Activated CD4-positive, alpha-beta T cell treated with anti-CD3 and anti-CD28 coated beads for 36 hours (primary cell): ENCODE measurements at regions of chr2 and their contacts with region 1.

Region 1: GRCh38 chr2:153519257-153519875 is 40.8 kb upstream of the RPRM start:
- DNase-seq: peak; percentile 74
- ATAC-seq: no peak
- H3K4me3 Mint-ChIP-seq: no peak overlapping the region
- H3K27ac Mint-ChIP-seq: no peak overlapping the region
- H3K4me1 Mint-ChIP-seq: no peaks in the 10 kb centered on the region
- H3K27me3 Mint-ChIP-seq: peaks cover 4% of the 10 kb centered on the region

Region 2: DNA sequence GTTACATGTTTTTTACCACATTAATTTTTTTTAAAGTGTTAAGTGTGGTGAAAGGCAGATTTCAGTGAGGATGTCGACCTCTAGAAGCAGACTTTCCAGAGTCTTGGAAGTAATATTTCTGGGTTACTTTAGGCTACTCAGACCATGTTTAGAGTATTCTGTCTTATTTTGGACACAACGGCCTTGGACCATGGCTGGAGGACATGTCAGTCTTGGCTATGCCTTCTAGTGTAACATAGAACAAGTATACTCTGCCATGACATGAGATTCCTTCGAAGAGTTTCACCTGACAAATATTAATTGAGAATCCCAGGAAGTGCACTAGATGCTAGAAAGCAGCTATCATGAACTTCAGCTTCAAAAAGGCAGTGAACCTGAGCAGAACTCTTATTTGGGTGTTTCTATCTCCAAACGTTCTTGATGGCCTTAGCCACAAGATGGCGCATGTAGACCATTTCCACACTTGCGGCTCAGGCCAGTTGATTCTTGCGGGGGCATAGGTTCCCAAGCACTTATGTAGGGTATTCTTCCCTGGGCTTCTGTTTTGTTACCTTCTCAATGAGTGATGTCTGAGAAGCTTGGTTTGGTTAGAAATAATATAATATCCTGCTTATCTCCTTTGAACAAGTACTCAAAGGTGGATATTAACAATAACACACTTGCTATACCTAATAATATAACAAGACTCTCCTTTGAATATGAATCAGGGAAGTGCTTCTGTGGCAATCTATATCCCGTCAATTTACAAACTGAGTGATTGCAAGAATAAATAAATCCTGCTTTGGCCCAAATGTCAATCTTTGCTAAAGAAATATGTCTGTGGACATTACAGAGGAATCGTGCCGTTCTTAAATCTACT is 1482.5 kb before region 1 on chr2:
- CTCF ChIA-PET with region 1: no interaction called
- POLR2A ChIA-PET with region 1: no interaction called
- intact Hi-C with region 1: loop called in 1 of 2 experiments (anchors 2 kb)
- DNase-seq: peak; percentile 77
- ATAC-seq: peak; percentile 42
- H3K4me3 Mint-ChIP-seq: no peak overlapping the region
- H3K27ac Mint-ChIP-seq: no peak overlapping the region
- H3K4me1 Mint-ChIP-seq: no peaks in the 10 kb centered on the region
- H3K27me3 Mint-ChIP-seq: peaks cover 2% of the 10 kb centered on the region

Region 3: DNA sequence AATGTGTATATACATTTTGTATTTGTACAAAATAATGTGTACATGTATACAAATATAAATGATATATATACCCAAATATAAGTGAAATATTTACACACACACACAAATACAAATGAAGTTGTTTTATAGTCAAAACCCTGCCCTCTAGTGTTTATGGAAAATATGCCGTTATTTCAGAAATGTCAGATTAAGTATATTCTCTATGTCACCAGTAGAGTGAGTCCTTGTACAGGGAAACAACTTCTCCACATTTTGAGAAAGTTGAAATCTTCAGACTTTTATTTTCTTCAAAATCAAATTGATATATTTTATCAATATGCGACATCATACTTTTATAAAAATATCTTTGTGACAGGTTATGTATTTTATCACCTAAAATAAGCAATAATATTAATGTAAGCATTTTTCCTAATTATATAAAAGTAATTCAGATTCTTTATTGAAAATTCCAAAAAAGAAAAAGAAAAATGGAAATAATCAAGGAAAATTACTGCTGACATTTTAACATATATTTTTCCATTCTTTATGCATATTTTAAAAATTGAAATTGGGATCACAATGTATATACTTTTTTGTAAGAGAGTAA is 778.5 kb before region 1 on chr2:
- CTCF ChIA-PET with region 1: no interaction called
- POLR2A ChIA-PET with region 1: no interaction called
- intact Hi-C with region 1: loop called in 1 of 2 experiments (anchors 2 kb)
- DNase-seq: no peak
- ATAC-seq: peak; percentile 69
- H3K4me3 Mint-ChIP-seq: no peak overlapping the region
- H3K27ac Mint-ChIP-seq: no peak overlapping the region
- H3K4me1 Mint-ChIP-seq: peaks cover 2% of the 10 kb centered on the region
- H3K27me3 Mint-ChIP-seq: no peaks in the 10 kb centered on the region

Region 4: DNA sequence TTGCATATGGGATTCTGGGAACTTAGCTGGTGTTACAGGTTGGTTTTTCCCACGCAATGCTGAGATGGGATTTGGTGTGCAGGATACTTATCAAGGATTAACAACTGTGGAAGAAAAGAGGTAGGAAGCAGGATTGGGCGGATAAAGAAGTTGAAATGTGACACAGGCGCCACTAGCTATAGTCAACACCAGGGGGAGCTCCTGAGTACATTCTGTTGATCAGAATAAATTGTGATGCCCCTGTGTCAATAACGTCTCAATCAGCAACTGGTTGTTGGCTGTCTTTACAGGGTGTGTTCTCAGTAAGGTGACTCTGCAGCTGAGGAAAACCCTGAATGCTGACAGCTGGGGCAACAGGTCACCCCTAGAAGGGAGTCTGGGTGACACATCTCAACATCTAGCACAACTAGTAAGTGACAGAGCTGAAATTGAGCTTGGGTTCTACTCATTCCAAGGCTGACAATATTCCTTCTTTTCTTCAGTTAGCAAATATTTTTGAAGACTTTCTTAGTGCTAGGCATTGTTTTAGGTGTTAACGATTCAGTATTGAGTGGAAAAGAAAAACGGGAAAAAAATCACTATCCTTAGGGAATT is 657.9 kb before region 1 on chr2:
- CTCF ChIA-PET with region 1: interaction called, 3 read pairs
- POLR2A ChIA-PET with region 1: no interaction called
- intact Hi-C with region 1: loop called in 1 of 2 experiments (anchors 1 kb)
- DNase-seq: peak; percentile 39
- ATAC-seq: no peak
- H3K4me3 Mint-ChIP-seq: no peak overlapping the region
- H3K27ac Mint-ChIP-seq: no peak overlapping the region
- H3K4me1 Mint-ChIP-seq: no peaks in the 10 kb centered on the region
- H3K27me3 Mint-ChIP-seq: peaks cover 7% of the 10 kb centered on the region

Region 5: GRCh38 chr2:152883951-152884487 is 635.3 kb before region 1 on chr2:
- CTCF ChIA-PET with region 1: no interaction called
- POLR2A ChIA-PET with region 1: no interaction called
- intact Hi-C with region 1: no loop called
- DNase-seq: no peak
- ATAC-seq: no peak
- H3K4me3 Mint-ChIP-seq: no peak overlapping the region
- H3K27ac Mint-ChIP-seq: no peak overlapping the region
- H3K4me1 Mint-ChIP-seq: no peaks in the 10 kb centered on the region
- H3K27me3 Mint-ChIP-seq: peaks cover 7% of the 10 kb centered on the region

Region 6: DNA sequence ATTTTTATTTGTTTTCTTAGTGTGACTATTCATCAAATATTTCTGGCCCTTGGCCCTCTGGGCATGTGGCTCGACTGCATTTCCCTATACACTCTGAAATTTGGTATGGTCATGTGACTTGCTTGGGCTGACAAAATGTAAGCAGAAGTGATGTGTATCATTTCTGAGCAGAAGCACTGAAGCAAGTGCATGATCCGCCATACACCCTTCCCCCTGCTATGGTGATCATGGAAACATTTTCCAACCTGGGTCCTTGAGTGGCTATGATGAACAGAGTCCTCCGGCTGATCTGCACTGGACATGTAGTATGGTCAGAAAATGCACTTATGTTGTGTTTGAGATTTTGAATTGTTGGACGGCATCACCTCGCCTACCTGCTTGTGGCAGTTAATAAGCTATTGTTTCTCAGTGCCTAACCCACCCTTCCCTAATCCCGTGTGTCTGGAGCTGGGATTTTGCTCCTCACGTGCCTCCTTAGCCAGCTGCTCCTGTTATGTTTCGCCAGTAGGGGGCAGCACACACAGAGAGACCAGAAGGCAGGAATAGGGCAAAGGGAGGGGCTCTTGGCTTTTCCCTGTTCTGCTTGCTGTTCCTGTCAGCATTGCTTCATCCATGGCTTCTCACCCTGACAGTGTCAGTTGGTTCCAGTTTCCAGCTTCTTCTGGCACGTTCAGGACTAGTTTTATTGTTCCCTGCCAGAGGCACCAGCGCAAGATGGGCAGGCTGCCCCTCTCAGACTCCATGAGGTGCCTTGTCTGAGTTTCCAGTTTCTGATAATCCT is 593.6 kb before region 1 on chr2:
- CTCF ChIA-PET with region 1: interaction called, 4 read pairs
- POLR2A ChIA-PET with region 1: no interaction called
- intact Hi-C with region 1: loop called (anchors 1 to 5 kb)
- DNase-seq: peak; percentile 76
- ATAC-seq: peak; percentile 53
- H3K4me3 Mint-ChIP-seq: no peak overlapping the region
- H3K27ac Mint-ChIP-seq: no peak overlapping the region
- H3K4me1 Mint-ChIP-seq: no peaks in the 10 kb centered on the region
- H3K27me3 Mint-ChIP-seq: peaks cover 6% of the 10 kb centered on the region

Region 7: GRCh38 chr2:153163058-153163457 is 356.3 kb before region 1 on chr2:
- CTCF ChIA-PET with region 1: interaction called, 4 read pairs
- POLR2A ChIA-PET with region 1: no interaction called
- intact Hi-C with region 1: loop called (anchors 1 to 2 kb)
- DNase-seq: no peak
- ATAC-seq: no peak
- H3K4me3 Mint-ChIP-seq: no peak overlapping the region
- H3K27ac Mint-ChIP-seq: no peak overlapping the region
- H3K4me1 Mint-ChIP-seq: no peaks in the 10 kb centered on the region
- H3K27me3 Mint-ChIP-seq: no peaks in the 10 kb centered on the region